ENCODE measurements at regions of chr17 and their contacts with region 1.

Region 1: GRCh38 chr17:72985881-72986720 is 106.4 kb downstream of the SLC39A11 start:
- DNase-seq: peak in 9 of 10 donors; percentile 43 to 94 (median 70)

Region 2: DNA sequence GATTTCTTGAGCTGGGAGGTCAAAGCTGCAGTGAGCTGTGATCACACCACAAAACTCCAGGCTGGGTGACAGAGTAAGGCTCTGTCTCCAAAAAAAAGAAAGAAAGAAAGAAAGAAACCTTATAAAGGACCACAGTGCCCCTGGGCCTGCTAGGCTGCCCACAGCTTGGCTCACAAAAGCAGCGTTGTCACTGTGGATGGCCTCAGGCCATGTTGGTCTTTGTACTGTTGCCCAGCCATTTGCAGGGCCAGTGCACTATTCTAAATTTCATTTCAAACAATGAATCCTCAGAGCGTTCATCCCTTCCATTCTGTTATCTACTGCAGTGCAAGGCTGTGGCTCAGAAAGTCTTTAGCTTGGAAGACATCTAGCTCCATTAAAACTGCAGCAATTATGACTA is 102.0 kb before region 1 on chr17:
- intact Hi-C with region 1: loop called (anchors 10 kb)
- DNase-seq: peak; percentile 64 to 97 (median 78)

Region 3: DNA sequence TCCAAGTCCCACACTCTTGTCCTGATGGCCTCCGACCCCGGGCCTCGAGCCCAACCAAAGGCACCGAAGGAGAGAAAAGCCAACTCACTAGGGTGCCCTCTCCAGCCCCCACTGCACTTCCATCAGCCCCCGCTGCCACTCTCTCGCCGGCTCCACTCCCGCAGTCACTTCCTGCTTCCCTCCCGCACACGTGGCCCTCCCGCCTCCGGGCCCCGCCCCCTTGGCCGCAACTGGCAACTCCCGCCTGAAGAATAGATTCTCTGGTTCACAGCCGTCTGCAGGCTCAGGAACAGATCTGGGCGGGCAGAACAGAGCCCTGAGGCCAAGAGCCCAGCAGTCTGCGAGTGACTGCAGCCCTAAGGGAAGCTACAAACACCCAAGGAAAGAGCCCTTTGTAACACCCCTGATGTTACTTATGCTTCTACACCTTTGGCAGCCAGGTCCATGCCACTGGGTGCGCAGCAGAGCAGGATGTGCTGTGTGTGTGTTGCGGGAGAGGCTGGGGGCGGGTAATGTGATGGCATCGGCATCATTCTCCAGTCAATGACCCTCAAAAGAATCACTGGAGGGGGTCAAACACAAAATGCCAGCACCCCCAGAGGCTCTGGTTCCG is 106.5 kb after region 1 on chr17 and contains the start of gene SLC39A11:
- intact Hi-C with region 1: loop called (anchors 5 kb)
- DNase-seq: peak; percentile 92 to 99 (median 94)

Region 4: GRCh38 chr17:73156166-73156840 is 170.2 kb after region 1 on chr17:
- intact Hi-C with region 1: loop called (anchors 1 kb)
- DNase-seq: peak; percentile 61 to 96 (median 78)

Region 5: GRCh38 chr17:73271072-73271471 is 285.0 kb after region 1 on chr17:
- intact Hi-C with region 1: no loop called
- DNase-seq: peak in 3 of 10 donors; percentile 57 to 65 (median 64)

Measured in posterior cingulate gyrus (tissue), 11 donors.